ENCODE measurements at regions of chr16 and their contacts with region 1.

Region 1: GRCh38 chr16:50681021-50681885 is at the start of gene SNX20:
- DNase-seq: peak; percentile 78
- H3K4me3 Mint-ChIP-seq: peak within 1 kb of the TSS; percentile 83
- H3K27ac Mint-ChIP-seq: peak within 1 kb of the TSS; percentile 93
- H3K4me1 Mint-ChIP-seq: peaks cover 81% of the 10 kb centered on the region
- H3K27me3 Mint-ChIP-seq: no peaks in the 10 kb centered on the region
- total RNA-seq, gene SNX20: 29.6 to 30.3 TPM

Region 2: GRCh38 chr16:50696575-50697420 is 15.5 kb after region 1 on chr16:
- CTCF ChIA-PET with region 1: interaction called, 11 read pairs
- intact Hi-C with region 1: loop called (anchors 1 kb)
- DNase-seq: peak; percentile 46
- H3K4me3 Mint-ChIP-seq: no peak overlapping the region
- H3K27ac Mint-ChIP-seq: peak overlapping the region; percentile 34
- H3K4me1 Mint-ChIP-seq: peaks cover 73% of the 10 kb centered on the region
- H3K27me3 Mint-ChIP-seq: no peaks in the 10 kb centered on the region

Region 3: DNA sequence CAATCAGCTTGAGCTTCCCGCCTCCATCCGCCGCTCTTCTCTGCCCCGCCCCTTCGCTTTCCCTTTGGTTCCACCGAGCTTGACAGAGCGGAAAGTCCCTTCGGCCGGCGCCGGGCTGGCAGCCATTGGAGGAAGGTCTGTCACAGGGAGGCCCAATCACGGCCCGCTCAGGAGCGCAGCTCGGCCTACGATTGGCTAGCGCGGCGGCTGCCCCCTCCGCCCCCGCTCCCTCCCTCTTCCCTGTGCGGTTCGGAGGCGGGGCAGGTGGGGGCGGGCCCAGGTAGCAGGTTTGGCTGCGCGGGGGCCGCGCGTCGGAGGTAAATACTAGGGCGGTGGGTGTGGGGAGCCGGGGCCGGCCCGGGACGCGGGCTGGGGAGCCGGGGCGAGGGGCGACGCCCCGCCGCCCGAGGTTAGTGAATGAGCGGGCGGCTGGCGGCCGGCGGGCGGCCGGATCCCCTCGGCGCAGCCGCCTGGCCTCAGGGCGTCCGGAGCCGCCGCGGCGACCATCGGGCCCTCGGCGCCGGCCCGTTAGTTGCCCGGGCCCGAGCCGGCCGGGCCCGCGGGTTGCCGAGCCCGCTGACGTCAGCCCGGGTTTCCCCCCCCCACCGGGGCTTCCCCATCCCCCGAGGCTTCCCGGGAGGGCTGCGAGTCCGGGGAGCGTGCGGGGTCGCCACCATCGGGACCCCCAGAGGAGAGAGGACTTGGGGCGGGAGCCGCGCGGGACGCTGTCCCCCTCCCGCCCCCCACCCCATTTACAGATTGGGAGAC is 60.7 kb after region 1 on chr16 and contains the start of gene CYLD:
- CTCF ChIA-PET with region 1: interaction called, 532 read pairs
- intact Hi-C with region 1: loop called (anchors 1 kb)
- DNase-seq: peak; percentile 100
- H3K4me3 Mint-ChIP-seq: peak within 1 kb of the TSS; percentile 90
- H3K27ac Mint-ChIP-seq: peak within 1 kb of the TSS; percentile 96
- H3K4me1 Mint-ChIP-seq: peaks cover 42% of the 10 kb centered on the region
- H3K27me3 Mint-ChIP-seq: no peaks in the 10 kb centered on the region
- total RNA-seq, gene CYLD: 70.8 to 71.9 TPM

Region 4: DNA sequence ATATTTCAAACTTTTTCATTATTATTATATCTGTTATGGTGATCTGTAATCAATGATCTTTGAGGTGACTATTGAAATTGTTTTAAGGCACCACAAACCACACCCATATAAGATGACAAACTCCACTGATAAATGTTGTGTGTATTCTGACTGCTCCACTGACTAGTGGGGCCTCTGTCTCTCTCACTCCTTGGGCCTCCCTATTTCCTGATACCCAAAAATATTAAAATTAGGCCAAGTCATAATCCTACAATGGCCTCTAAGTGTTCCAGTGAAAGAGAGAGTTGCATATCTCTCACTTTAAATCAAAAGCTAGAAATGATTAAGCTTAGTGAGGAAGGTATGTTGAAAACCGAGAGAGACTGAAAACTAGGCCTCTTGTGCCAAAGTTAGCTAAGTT is 84.0 kb after region 1 on chr16:
- CTCF ChIA-PET with region 1: interaction called, 4 read pairs
- intact Hi-C with region 1: loop called (anchors 1 kb)
- DNase-seq: peak; percentile 23
- H3K4me3 Mint-ChIP-seq: peak overlapping the region; percentile 14
- H3K27ac Mint-ChIP-seq: peak overlapping the region; percentile 79
- H3K4me1 Mint-ChIP-seq: peaks cover 89% of the 10 kb centered on the region
- H3K27me3 Mint-ChIP-seq: no peaks in the 10 kb centered on the region

Region 5: GRCh38 chr16:50781043-50781442 is 99.8 kb after region 1 on chr16:
- CTCF ChIA-PET with region 1: interaction called, 7 read pairs
- intact Hi-C with region 1: loop called (anchors 5 kb)
- DNase-seq: peak; percentile 48
- H3K4me3 Mint-ChIP-seq: peak overlapping the region; percentile 18
- H3K27ac Mint-ChIP-seq: peak overlapping the region; percentile 70
- H3K4me1 Mint-ChIP-seq: peaks cover 51% of the 10 kb centered on the region
- H3K27me3 Mint-ChIP-seq: no peaks in the 10 kb centered on the region